Mucosa of descending colon (tissue), 3 donors: ENCODE measurements at regions of chr20 and their contacts with region 1.

Region 1: GRCh38 chr20:51372176-51372803 is 170.2 kb downstream of the NFATC2 start:
- DNase-seq: peak in 2 of 3 donors; percentile 70 to 76
- ATAC-seq: peak; percentile 85
- H3K4me3 ChIP-seq: no peak overlapping the region
- H3K4me1 ChIP-seq: no peaks in the 10 kb centered on the region
- CTCF ChIP-seq: no peak

Region 2: GRCh38 chr20:51595058-51595532 is 222.8 kb after region 1 on chr20:
- intact Hi-C with region 1: loop called (anchors 5 kb)
- DNase-seq: peak; percentile 83 to 89 (median 86)
- ATAC-seq: peak; percentile 97
- H3K4me3 ChIP-seq: no peak overlapping the region
- H3K4me1 ChIP-seq: peaks cover 5% of the 10 kb centered on the region
- CTCF ChIP-seq: peak; percentile 60

Region 3: DNA sequence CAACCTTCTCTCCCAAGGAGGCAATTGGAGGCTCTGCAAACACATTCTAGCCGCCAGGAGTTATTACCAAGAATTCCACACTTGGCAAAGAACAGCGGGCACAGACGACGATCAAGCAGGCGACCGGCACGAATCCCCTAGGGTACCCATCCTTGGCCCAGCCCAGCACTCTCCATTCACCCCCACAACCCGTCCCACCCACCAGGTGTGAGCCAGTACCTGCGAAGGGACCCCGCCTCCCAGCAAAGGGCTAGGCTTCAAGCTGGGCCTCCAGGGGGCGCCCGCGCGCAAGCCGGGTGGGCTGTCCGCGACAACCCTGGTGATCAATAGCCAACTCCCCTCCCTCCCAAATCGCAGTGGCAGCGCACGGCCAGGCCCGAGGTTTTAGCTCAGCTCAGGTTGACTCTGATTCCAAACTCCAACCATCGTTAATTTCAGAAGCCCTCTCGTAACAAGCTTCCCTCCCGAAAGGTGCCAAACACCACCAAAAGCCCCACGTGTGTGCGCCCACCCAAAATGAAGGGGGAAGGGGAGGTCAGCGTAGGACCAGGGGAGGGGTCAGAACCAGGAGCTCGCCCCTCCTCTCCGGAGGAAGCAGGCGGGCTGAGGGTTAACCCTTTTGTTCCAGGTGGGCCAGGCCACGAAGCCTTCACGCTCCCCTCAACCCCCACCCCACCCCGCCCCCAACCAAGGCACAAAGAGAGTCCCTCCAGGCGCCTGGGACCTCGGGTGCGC is 427.9 kb after region 1 on chr20:
- intact Hi-C with region 1: loop called in 1 of 2 experiments (anchors 10 kb)
- DNase-seq: peak; percentile 63 to 80 (median 74)
- ATAC-seq: peak; percentile 88
- H3K4me3 ChIP-seq: no peak overlapping the region
- H3K4me1 ChIP-seq: peaks cover 10% of the 10 kb centered on the region
- CTCF ChIP-seq: peak; percentile 81